Activated T-helper 1 cell treated with anti-CD3 and anti-CD28 coated beads, Interleukin-12 subunit alpha, Interleukin-12 subunit beta, Interleukin-2, Interleukin-4 antibody, amounts not matched to agents 30 ng/mL and 10 ng/mL and 1 ng/mL, durations not matched to agents 14 hours and 24 hours and 36 hours (primary cell): ENCODE measurements at regions of chr4 and their contacts with region 1.

Region 1: DNA sequence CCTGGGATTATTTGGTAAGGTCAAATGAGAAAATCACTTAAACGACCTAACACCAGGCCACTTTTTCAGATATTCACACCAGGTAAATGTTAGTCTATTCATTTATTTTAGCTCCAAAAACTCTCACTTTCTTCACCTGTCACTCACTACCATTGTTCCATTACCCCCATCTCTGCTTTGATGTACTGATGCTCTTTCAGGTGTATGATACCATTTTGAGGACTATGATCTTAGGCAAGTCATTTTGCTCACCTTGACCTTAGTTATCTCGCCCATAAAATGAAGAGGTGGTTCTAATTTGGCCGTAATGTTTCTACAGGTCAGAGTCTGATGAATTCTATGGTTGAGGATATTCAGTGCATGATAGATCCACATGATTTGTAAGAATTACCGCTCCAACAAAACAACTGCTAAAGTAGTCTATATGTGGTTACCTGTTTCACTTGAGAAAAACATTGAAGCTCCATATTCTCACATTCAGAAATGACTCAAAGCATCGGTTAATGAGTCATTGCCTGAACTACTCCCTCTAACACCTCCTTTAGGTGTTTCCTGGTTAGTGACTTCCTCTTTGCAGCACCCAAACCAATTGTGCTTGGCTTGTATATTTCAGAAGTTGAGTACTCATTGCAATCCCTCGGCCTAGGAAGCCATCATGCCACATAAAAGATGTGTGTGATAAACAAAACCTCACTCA is 4.5 kb downstream of the DTHD1 start:
- DNase-seq: peak; percentile 79
- H3K4me3 Mint-ChIP-seq: peak overlapping the region; percentile 49
- H3K27ac Mint-ChIP-seq: peak overlapping the region; percentile 95
- H3K4me1 Mint-ChIP-seq: peaks cover 78% of the 10 kb centered on the region
- H3K27me3 Mint-ChIP-seq: peaks cover 2% of the 10 kb centered on the region

Region 2: GRCh38 chr4:36081185-36081584 is 204.7 kb before region 1 on chr4:
- intact Hi-C with region 1: loop called (anchors 2 kb)
- DNase-seq: no peak
- H3K4me3 Mint-ChIP-seq: no peak overlapping the region
- H3K27ac Mint-ChIP-seq: no peak overlapping the region
- H3K4me1 Mint-ChIP-seq: peaks cover 3% of the 10 kb centered on the region
- H3K27me3 Mint-ChIP-seq: no peaks in the 10 kb centered on the region

Region 3: DNA sequence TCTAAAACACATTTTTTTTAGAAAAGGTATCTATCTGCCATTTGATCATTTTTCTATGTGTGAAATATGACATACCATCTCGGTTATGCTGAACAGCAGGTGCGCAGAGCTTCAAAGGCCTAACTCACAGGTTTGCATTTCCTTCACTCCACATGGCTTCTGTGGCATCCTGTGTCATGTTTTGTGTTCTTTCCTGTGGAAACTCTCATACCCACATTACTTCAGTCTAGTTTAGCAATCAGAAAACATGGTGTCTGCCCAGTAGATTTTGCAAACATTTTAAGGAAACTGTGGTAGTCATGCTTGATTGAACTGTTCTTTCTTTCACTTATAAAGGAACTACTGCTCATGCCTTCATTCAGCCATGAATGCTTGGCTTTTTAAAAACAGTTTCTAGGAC is 30.4 kb before region 1 on chr4:
- intact Hi-C with region 1: loop called (anchors 1 kb)
- DNase-seq: peak; percentile 72
- H3K4me3 Mint-ChIP-seq: peak overlapping the region; percentile 81
- H3K27ac Mint-ChIP-seq: peak overlapping the region; percentile 97
- H3K4me1 Mint-ChIP-seq: peaks cover 47% of the 10 kb centered on the region
- H3K27me3 Mint-ChIP-seq: no peaks in the 10 kb centered on the region

Region 4: GRCh38 chr4:36316607-36317006 is 30.7 kb after region 1 on chr4:
- intact Hi-C with region 1: loop called (anchors 1 kb)
- DNase-seq: no peak
- H3K4me3 Mint-ChIP-seq: no peak overlapping the region
- H3K27ac Mint-ChIP-seq: peak overlapping the region; percentile 74
- H3K4me1 Mint-ChIP-seq: peaks cover 79% of the 10 kb centered on the region
- H3K27me3 Mint-ChIP-seq: no peaks in the 10 kb centered on the region

Region 5: DNA sequence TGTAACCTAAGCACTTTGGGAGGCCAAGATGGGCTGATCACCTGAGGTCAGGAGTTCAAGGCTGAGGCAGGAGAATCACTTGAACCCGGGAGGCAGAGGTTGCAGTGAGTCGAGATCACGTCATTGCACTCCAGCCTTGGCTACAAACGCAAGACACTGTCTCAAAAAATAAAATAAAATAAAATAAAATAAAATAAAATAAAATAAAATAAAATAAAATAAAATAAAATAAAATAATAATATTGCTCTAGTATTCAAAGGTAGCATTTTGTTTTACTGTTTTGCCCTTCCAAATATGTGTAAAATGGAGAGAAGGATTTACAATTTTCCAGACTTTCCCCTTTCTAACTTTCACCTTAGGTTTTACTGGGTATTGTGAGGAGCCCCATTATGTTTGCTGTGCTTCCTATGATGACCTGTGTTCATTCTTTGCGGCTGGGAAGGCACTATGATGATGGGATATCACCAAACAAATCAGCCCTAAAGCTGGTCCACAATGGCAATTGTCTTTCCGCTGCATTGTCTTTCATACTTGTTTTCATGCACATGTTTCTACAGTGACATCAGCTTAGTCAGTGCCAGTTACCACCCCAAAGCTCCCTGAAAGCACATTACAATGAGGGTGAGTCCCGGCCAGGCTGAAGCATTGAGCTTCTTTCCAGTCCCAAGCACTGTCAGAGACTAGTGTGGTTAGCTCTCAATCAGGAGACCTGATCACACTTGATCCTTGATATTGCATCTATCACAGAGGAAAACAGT is 46.3 kb after region 1 on chr4:
- intact Hi-C with region 1: loop called (anchors 1 kb)
- DNase-seq: no peak
- H3K4me3 Mint-ChIP-seq: no peak overlapping the region
- H3K27ac Mint-ChIP-seq: peak overlapping the region; percentile 66
- H3K4me1 Mint-ChIP-seq: peaks cover 35% of the 10 kb centered on the region
- H3K27me3 Mint-ChIP-seq: no peaks in the 10 kb centered on the region

Region 6: GRCh38 chr4:36358173-36358572 is 72.2 kb after region 1 on chr4:
- intact Hi-C with region 1: no loop called
- DNase-seq: no peak
- H3K4me3 Mint-ChIP-seq: no peak overlapping the region
- H3K27ac Mint-ChIP-seq: no peak overlapping the region
- H3K4me1 Mint-ChIP-seq: no peaks in the 10 kb centered on the region
- H3K27me3 Mint-ChIP-seq: peaks cover 6% of the 10 kb centered on the region

Region 7: DNA sequence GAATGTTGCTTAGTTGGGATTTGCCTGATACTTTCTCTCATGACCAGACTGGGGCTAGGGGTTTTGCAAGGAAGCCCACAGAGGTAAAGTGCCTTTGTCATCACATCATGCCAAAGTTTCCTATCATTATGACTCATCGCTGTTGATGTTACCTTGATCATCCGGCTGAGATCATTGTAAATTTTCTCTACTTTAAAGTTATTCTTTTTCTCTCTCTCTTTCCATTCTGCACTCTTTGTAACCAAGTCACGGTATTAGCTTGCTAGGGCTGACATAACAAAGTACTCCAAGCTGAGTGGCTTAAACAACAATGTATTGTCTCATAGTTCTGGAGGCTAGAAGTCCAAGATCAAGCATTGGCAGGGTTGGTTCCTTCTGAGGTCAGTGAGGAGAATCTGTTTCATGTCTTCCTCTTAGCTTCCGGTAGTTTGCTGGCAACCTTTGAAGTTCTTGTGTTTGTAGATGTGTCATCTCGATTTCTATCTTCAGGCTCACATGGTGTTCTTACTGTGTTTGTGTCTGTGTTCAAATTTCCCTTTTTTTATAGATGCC is 108.5 kb after region 1 on chr4:
- intact Hi-C with region 1: loop called (anchors 1 kb)
- DNase-seq: peak; percentile 56
- H3K4me3 Mint-ChIP-seq: peak overlapping the region; percentile 71
- H3K27ac Mint-ChIP-seq: peak overlapping the region; percentile 97
- H3K4me1 Mint-ChIP-seq: peaks cover 34% of the 10 kb centered on the region
- H3K27me3 Mint-ChIP-seq: peaks cover 5% of the 10 kb centered on the region

Region 8: GRCh38 chr4:36411327-36411726 is 125.4 kb after region 1 on chr4:
- intact Hi-C with region 1: no loop called
- DNase-seq: no peak
- H3K4me3 Mint-ChIP-seq: no peak overlapping the region
- H3K27ac Mint-ChIP-seq: no peak overlapping the region
- H3K4me1 Mint-ChIP-seq: no peaks in the 10 kb centered on the region
- H3K27me3 Mint-ChIP-seq: peaks cover 35% of the 10 kb centered on the region